IMR-90 (cell line): ENCODE measurements at regions of chr10 and their contacts with region 1.

Region 1: DNA sequence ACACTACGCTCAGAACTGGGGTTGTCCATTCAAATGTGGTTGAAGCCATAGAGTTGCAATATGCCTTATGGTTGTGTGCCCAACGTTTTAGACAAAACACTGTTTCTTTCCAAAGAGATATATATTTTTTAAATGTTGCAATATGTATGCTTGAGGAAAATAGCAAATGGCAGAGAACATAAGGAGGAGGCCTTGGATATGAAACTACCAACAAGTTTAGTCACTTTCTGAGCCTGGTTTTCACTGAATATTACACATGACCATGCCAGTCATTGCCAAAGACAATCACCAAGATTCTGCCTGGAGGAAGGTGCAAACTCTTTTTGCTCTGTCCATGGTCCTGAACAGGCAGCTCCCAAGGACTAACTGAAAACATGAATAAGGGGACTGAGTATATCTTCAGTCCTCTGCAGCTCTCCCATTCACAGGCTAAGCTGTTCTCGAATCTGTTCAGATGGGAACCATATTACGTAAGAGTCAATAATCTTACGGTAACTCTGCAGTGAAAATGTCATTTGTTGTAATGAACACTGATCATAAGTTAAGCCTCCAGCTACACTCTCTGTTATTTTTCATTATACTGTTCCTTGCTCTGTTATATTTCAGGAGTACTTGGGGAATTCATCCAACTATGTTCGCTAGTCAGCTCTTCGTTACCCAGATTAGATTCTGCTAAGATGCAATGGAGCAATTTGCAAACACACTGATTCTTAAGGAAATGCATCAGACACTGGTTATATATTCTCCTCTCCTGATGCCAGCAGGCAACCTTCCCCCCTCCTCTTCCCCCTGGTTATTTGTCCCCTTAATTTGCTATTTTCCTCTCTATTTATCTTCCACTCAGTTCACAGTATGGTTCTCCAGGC is 90.7 kb upstream of the C1QL3 start:
- DNase-seq: peak; percentile 46
- ATAC-seq: peak; percentile 71
- H3K4me3 ChIP-seq: no peak overlapping the region
- H3K27ac ChIP-seq: no peak overlapping the region
- H3K4me1 ChIP-seq: no peaks in the 10 kb centered on the region
- H3K27me3 ChIP-seq: no peaks in the 10 kb centered on the region
- CTCF ChIP-seq: no peak
- POLR2A ChIP-seq: no peak
- RAD21 ChIP-seq: no peak

Region 2: GRCh38 chr10:16626697-16627096 is 14.3 kb after region 1 on chr10:
- CTCF ChIA-PET with region 1: no interaction called
- POLR2A ChIA-PET with region 1: no interaction called
- dilution Hi-C with region 1: no loop called
- in situ Hi-C with region 1: no loop called
- intact Hi-C with region 1: no loop called
- DNase-seq: no peak
- ATAC-seq: no peak
- H3K4me3 ChIP-seq: no peak overlapping the region
- H3K27ac ChIP-seq: no peak overlapping the region
- H3K4me1 ChIP-seq: no peaks in the 10 kb centered on the region
- H3K27me3 ChIP-seq: no peaks in the 10 kb centered on the region
- CTCF ChIP-seq: no peak
- POLR2A ChIP-seq: no peak
- RAD21 ChIP-seq: no peak

Region 3: DNA sequence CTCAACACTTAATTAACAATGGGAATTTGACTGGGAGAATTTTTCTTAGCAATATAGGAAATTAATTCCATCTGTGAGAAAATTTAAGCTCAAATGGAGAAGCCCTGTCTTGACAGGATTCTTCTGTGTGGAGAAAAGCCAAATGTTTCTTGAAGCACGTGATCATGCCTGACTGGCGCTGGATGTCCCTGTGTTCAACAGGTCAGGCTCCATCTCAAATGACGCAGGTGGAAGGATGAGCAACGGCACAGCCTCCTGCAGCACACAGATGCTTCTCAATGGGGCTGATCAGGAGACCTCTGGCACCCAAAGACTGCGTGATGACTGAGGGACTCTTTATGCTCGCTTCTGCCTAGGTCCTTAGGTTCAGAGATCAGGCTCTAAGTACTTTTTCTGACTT is 61.1 kb after region 1 on chr10:
- CTCF ChIA-PET with region 1: no interaction called
- POLR2A ChIA-PET with region 1: no interaction called
- dilution Hi-C with region 1: no loop called
- in situ Hi-C with region 1: no loop called
- intact Hi-C with region 1: loop called (anchors 5 kb)
- DNase-seq: no peak
- ATAC-seq: no peak
- H3K4me3 ChIP-seq: no peak overlapping the region
- H3K27ac ChIP-seq: no peak overlapping the region
- H3K4me1 ChIP-seq: no peaks in the 10 kb centered on the region
- H3K27me3 ChIP-seq: no peaks in the 10 kb centered on the region
- CTCF ChIP-seq: no peak
- POLR2A ChIP-seq: no peak
- RAD21 ChIP-seq: no peak

Region 4: GRCh38 chr10:16742165-16742960 is 130.0 kb after region 1 on chr10:
- CTCF ChIA-PET with region 1: no interaction called
- POLR2A ChIA-PET with region 1: no interaction called
- dilution Hi-C with region 1: no loop called
- in situ Hi-C with region 1: no loop called
- intact Hi-C with region 1: no loop called
- DNase-seq: no peak
- ATAC-seq: no peak
- H3K4me3 ChIP-seq: no peak overlapping the region
- H3K27ac ChIP-seq: no peak overlapping the region
- H3K4me1 ChIP-seq: no peaks in the 10 kb centered on the region
- H3K27me3 ChIP-seq: no peaks in the 10 kb centered on the region
- CTCF ChIP-seq: no peak
- POLR2A ChIP-seq: no peak
- RAD21 ChIP-seq: no peak

Region 5: GRCh38 chr10:16828114-16828568 is 215.8 kb after region 1 on chr10:
- CTCF ChIA-PET with region 1: no interaction called
- POLR2A ChIA-PET with region 1: no interaction called
- dilution Hi-C with region 1: no loop called
- in situ Hi-C with region 1: no loop called
- intact Hi-C with region 1: no loop called
- DNase-seq: peak; percentile 83
- ATAC-seq: peak; percentile 83
- H3K4me3 ChIP-seq: no peak overlapping the region
- H3K27ac ChIP-seq: no peak overlapping the region
- H3K4me1 ChIP-seq: peaks cover 2% of the 10 kb centered on the region; the same call in 1 of the 2 replicates
- H3K27me3 ChIP-seq: no peaks in the 10 kb centered on the region
- CTCF ChIP-seq: peak; percentile 70
- POLR2A ChIP-seq: no peak
- RAD21 ChIP-seq: peak; percentile 78